ENCODE measurements at regions of chr3 and their contacts with region 1.

Region 1: DNA sequence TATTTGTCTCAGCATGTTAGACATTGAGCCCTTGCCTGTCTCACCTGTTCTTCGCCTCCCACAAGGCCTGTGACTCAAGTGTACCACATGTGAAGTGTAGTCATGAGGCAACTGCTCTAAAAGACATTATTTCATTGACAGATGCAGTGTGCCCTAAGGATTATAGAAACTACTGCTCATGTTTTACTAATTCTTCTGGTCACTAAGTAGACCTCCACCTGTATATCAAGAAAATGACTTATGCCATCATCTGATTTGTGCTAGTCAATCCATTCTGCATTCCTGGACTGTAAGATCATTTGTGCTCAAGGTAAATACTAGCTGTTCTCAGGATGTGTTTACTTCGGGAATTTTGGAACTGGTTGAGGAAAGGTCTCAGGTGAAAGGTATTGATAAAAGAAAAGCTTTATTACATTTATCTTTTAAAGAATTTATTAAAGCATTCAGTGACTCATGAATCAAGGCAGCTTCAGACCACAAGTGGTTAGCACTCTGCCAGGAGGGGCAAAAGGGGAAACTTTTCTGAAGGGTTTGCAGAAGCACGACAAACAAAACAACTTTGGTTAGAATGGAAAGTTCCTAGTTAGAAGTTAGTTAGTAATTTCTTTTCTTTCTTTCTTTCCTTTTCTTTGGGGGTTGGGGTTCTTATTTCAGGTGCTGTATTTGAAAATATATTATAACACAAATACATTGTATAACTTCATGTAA is 465.3 kb upstream of the CBLB start:
- DNase-seq: peak; percentile 77
- H3K4me3 Mint-ChIP-seq: peak overlapping the region; percentile 75
- H3K27ac Mint-ChIP-seq: peak overlapping the region; percentile 91
- H3K4me1 Mint-ChIP-seq: peaks cover 74% of the 10 kb centered on the region
- H3K27me3 Mint-ChIP-seq: no peaks in the 10 kb centered on the region

Region 2: DNA sequence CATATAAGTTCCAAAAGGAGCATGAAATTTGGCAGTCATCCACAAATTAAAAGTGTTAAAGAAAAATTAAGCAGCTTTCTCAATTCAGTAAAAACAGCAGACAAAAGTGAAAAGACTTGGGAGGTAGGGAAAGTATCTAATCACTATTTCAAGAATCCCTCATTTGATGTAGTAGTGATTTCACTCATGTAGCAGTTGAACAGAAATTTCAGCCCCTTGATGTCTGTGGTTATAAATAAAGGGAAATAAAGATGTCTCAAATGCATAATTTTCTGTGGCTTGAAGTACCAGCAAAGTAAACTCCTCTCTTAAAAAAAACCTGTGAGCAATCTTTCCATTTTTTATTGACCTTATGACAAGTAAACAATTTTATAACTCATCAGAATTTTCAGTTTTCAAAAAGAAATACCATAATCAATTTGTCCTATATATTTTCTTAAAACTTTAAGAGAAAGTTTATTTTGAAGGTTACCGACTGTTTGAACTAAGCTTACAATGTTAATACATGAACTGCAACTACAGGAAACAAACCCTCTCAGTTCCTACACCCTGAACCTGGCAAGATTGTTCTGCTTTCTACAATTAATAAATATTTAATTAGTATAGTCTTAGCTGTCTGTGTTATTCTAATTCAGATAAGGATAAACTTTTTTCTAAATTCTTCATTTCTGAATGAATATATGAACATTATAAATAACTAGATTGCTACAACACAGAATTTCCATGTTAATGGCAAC is 559.5 kb before region 1 on chr3:
- intact Hi-C with region 1: loop called (anchors 1 kb)
- DNase-seq: no peak
- H3K4me3 Mint-ChIP-seq: no peak overlapping the region
- H3K27ac Mint-ChIP-seq: peak overlapping the region; percentile 78
- H3K4me1 Mint-ChIP-seq: peaks cover 65% of the 10 kb centered on the region
- H3K27me3 Mint-ChIP-seq: no peaks in the 10 kb centered on the region

Region 3: GRCh38 chr3:106097817-106098435 is 236.1 kb before region 1 on chr3:
- intact Hi-C with region 1: no loop called
- DNase-seq: no peak
- H3K4me3 Mint-ChIP-seq: no peak overlapping the region
- H3K27ac Mint-ChIP-seq: no peak overlapping the region
- H3K4me1 Mint-ChIP-seq: peaks cover 5% of the 10 kb centered on the region
- H3K27me3 Mint-ChIP-seq: no peaks in the 10 kb centered on the region

Region 4: DNA sequence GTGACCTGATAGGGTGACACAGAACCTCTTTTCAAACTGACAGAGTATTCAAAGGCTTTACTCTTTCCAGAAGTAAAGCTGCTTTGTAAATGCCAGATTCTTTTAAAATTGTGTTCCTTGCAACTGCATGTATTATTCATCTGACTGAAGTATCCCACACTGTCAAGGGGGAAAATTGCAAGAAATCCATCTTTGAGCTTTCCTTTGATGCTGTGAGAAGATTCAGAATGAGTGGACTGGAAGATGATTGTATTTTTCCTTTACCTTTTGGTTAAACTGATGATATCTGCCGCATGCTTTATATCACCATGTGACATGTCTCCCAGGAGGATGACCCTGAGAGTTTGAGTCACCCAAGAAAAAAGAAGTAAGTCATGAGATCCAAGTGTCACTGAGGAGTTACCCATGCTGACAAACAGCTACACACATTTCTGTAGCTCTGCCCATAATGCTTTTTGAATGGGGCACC is 214.4 kb before region 1 on chr3:
- intact Hi-C with region 1: loop called (anchors 1 kb)
- DNase-seq: no peak
- H3K4me3 Mint-ChIP-seq: peak overlapping the region; percentile 46
- H3K27ac Mint-ChIP-seq: peak overlapping the region; percentile 87
- H3K4me1 Mint-ChIP-seq: peaks cover 28% of the 10 kb centered on the region
- H3K27me3 Mint-ChIP-seq: no peaks in the 10 kb centered on the region

Region 5: DNA sequence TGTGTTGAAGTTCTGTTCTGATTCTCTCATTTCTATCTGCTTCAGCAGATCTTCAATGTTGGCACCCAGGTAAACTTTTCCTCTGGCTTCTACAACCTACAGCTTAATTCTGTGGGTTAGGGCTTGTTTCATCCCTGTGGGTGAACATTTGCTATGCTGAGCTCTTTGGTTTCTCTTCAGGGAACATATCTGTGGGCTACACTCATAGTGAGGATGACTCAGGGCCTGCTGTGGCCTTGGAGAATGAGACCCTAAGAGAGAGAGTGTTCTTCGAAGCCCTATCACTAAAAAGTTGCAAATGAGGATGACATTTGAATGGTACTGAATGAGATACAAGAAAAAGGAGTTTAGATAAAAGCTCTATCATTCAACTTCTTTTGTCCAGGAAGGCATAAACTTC is 119.0 kb before region 1 on chr3:
- intact Hi-C with region 1: loop called (anchors 1 kb)
- DNase-seq: peak; percentile 64
- H3K4me3 Mint-ChIP-seq: peak overlapping the region; percentile 3
- H3K27ac Mint-ChIP-seq: peak overlapping the region; percentile 70
- H3K4me1 Mint-ChIP-seq: peaks cover 32% of the 10 kb centered on the region
- H3K27me3 Mint-ChIP-seq: no peaks in the 10 kb centered on the region

Region 6: DNA sequence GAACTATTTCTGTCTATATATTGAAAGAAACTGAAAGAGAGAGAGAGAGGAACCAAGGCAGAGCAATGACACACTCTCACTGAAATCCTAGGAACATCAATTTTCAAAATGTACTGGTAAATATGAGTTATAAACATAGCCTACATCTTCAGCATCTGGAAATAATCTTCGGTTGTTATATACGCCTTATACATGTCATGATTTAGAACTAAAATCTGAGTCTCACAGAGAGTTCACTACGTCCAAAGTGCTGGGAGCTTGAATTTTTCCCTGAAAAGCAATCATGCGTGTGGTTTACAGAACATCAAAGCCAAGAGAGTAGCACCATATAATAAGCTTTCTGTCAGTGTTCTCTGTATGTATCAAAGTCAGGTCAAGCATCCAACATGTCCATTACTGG is 45.3 kb before region 1 on chr3:
- intact Hi-C with region 1: no loop called
- DNase-seq: no peak
- H3K4me3 Mint-ChIP-seq: no peak overlapping the region
- H3K27ac Mint-ChIP-seq: no peak overlapping the region
- H3K4me1 Mint-ChIP-seq: peaks cover 8% of the 10 kb centered on the region
- H3K27me3 Mint-ChIP-seq: no peaks in the 10 kb centered on the region

Region 7: GRCh38 chr3:106423321-106424225 is 89.5 kb after region 1 on chr3:
- intact Hi-C with region 1: loop called (anchors 1 kb)
- DNase-seq: no peak
- H3K4me3 Mint-ChIP-seq: peak overlapping the region; percentile 13
- H3K27ac Mint-ChIP-seq: peak overlapping the region; percentile 85
- H3K4me1 Mint-ChIP-seq: peaks cover 43% of the 10 kb centered on the region
- H3K27me3 Mint-ChIP-seq: no peaks in the 10 kb centered on the region

Region 8: GRCh38 chr3:106609666-106610301 is 275.7 kb after region 1 on chr3:
- intact Hi-C with region 1: loop called (anchors 1 kb)
- DNase-seq: peak; percentile 90
- H3K4me3 Mint-ChIP-seq: no peak overlapping the region
- H3K27ac Mint-ChIP-seq: peak overlapping the region; percentile 83
- H3K4me1 Mint-ChIP-seq: peaks cover 24% of the 10 kb centered on the region
- H3K27me3 Mint-ChIP-seq: no peaks in the 10 kb centered on the region

Measured in activated CD4-positive, alpha-beta T cell treated with anti-CD3 and anti-CD28 coated beads, Interleukin-2, amount 10 ng/mL, durations not matched to agents 24 days and 14 days (primary cell).